Activated naive CD4-positive, alpha-beta T cell treated with anti-CD3 and anti-CD28 coated beads, Interleukin-2, amount 10 ng/mL, durations not matched to agents 7 days and 5 days (primary cell): ENCODE measurements at regions of chr2 and their contacts with region 1.

Region 1: GRCh38 chr2:7044261-7045250 is 127.3 kb downstream of the RNF144A start:
- DNase-seq: peak; percentile 68
- H3K4me3 Mint-ChIP-seq: no peak overlapping the region
- H3K27ac Mint-ChIP-seq: peak overlapping the region; percentile 34
- H3K4me1 Mint-ChIP-seq: peaks cover 7% of the 10 kb centered on the region
- H3K27me3 Mint-ChIP-seq: no peaks in the 10 kb centered on the region

Region 2: DNA sequence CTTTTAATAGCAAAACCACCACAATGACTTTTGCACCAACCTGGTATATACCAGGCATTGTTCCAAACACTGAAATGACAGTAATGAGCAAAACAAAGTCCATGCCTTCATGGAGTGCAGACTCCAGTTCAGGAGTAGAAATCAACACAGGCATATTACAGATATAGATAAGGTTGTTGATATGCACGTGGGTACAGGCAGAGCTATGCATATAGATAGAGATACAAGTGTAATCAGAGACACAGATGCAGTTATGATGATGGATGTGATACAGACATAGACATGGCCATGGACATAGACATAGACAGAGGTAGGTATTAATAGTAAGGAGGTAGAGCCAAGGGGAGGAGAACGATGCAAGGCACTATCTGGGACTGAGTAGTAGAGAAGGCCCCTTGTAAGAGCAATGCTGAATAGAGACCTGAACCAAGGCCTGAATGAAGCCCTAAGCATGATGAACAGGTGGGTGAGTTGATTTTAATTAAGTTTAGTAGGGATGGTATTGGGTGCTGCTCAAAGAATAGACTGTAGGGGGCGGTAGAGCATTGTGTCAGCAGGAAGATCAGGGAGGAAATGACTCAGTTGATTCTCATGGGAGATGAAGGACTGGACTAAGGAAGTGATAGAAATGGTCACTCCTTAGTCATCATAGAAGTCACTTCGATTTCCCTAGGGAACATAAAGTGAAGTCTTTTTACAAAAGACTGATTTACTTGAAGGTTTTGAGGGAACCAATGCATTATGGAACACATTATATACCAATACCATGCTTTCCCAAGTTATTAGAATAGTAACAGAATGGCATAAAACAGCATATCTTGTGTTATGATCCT is 218.3 kb before region 1 on chr2:
- CTCF ChIA-PET with region 1: interaction called, 25 read pairs
- DNase-seq: peak; percentile 73
- H3K4me3 Mint-ChIP-seq: no peak overlapping the region
- H3K27ac Mint-ChIP-seq: no peak overlapping the region
- H3K4me1 Mint-ChIP-seq: peaks cover 12% of the 10 kb centered on the region
- H3K27me3 Mint-ChIP-seq: peaks cover 9% of the 10 kb centered on the region

Region 3: GRCh38 chr2:6877402-6878304 is 166.9 kb before region 1 on chr2 and contains the start of gene RSAD2:
- CTCF ChIA-PET with region 1: interaction called, 10 read pairs
- DNase-seq: peak; percentile 57
- H3K4me3 Mint-ChIP-seq: peak within 1 kb of the TSS; percentile 74
- H3K27ac Mint-ChIP-seq: peak within 1 kb of the TSS; percentile 87
- H3K4me1 Mint-ChIP-seq: peaks cover 80% of the 10 kb centered on the region
- H3K27me3 Mint-ChIP-seq: peaks cover 4% of the 10 kb centered on the region

Region 4: DNA sequence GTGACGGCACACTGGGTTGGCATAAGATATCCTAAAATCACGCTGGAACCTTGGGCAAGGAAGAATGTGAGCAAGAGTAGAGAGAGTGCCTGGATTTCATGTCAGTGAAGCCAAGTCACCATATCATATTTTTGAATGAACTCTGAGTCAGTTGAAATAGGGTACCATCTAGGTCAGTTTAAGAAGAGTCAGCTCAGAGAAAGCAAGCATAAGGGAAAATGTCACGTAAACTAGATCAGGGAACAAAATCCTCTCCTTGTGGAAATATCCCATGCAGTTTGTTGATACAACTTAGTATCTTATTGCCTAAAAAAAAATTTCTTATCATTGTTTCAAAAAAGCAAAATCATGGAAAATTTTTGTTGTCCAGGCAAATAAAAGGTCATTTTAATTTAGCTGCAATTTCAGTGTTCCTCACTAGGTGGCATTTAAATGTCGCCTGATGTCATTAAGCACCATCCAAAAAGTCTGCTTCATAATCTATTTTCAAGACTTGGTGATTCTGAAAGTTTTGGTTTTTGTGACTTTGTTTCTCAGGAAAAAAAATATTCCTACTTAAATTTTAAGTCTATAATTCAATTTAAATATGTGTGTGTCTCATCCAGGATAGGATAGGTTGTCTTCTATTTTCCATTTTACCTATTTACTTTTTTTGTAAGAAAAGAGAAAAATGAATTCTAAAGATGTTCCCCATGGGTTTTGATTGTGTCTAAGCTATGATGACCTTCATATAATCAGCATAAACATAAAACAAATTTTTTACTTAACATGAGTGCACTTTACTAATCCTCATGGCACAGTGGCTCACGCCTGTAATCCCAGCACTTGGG is 147.4 kb before region 1 on chr2:
- CTCF ChIA-PET with region 1: interaction called, 51 read pairs
- DNase-seq: no peak
- H3K4me3 Mint-ChIP-seq: no peak overlapping the region
- H3K27ac Mint-ChIP-seq: no peak overlapping the region
- H3K4me1 Mint-ChIP-seq: peaks cover 23% of the 10 kb centered on the region
- H3K27me3 Mint-ChIP-seq: no peaks in the 10 kb centered on the region

Region 5: DNA sequence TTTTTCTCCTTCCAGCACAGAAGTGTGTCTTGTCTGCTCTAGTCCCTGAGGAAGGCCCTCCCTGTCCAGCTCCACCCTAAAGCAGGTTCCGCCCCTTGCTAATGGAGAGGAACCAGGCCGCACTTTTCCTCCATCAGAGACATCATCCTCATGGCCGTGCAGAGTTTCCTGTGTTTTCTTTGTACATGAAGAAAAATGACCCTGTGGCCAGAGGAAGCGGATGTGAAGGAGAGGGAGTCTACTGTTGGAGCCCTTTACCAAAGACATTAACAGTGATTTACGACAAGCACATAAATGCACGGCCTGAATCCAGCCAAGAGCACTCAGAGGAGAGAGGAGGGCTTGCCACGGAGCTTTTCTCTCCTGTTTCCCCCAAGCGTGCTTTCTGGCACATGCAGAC is 17.8 kb before region 1 on chr2:
- CTCF ChIA-PET with region 1: interaction called, 16 read pairs
- DNase-seq: no peak
- H3K4me3 Mint-ChIP-seq: no peak overlapping the region
- H3K27ac Mint-ChIP-seq: peak overlapping the region; percentile 19
- H3K4me1 Mint-ChIP-seq: peaks cover 19% of the 10 kb centered on the region
- H3K27me3 Mint-ChIP-seq: no peaks in the 10 kb centered on the region

Region 6: GRCh38 chr2:7034316-7034715 is 10.2 kb before region 1 on chr2:
- CTCF ChIA-PET with region 1: interaction called, 16 read pairs
- DNase-seq: no peak
- H3K4me3 Mint-ChIP-seq: no peak overlapping the region
- H3K27ac Mint-ChIP-seq: no peak overlapping the region
- H3K4me1 Mint-ChIP-seq: peaks cover 6% of the 10 kb centered on the region
- H3K27me3 Mint-ChIP-seq: no peaks in the 10 kb centered on the region